ENCODE measurements at regions of chr22 and their contacts with region 1.

Region 1: GRCh38 chr22:29603358-29604075 is at the start of gene NF2:
- DNase-seq: peak; percentile 97
- H3K4me3 ChIP-seq: peak within 1 kb of the TSS; percentile 85
- H3K27me3 ChIP-seq: no peaks in the 10 kb centered on the region
- CTCF ChIP-seq: no peak
- polyA plus RNA-seq, gene NF2: 36.0 and 41.9 TPM in 2 replicates

Region 2: GRCh38 chr22:29587938-29588699 is 15.4 kb before region 1 on chr22:
- CTCF ChIA-PET with region 1: interaction called, 17 read pairs
- POLR2A ChIA-PET with region 1: no interaction called
- DNase-seq: peak; percentile 32
- H3K4me3 ChIP-seq: no peak overlapping the region
- H3K27me3 ChIP-seq: no peaks in the 10 kb centered on the region
- CTCF ChIP-seq: no peak